ENCODE measurements at regions of chr2 and their contacts with region 1.

Region 1: DNA sequence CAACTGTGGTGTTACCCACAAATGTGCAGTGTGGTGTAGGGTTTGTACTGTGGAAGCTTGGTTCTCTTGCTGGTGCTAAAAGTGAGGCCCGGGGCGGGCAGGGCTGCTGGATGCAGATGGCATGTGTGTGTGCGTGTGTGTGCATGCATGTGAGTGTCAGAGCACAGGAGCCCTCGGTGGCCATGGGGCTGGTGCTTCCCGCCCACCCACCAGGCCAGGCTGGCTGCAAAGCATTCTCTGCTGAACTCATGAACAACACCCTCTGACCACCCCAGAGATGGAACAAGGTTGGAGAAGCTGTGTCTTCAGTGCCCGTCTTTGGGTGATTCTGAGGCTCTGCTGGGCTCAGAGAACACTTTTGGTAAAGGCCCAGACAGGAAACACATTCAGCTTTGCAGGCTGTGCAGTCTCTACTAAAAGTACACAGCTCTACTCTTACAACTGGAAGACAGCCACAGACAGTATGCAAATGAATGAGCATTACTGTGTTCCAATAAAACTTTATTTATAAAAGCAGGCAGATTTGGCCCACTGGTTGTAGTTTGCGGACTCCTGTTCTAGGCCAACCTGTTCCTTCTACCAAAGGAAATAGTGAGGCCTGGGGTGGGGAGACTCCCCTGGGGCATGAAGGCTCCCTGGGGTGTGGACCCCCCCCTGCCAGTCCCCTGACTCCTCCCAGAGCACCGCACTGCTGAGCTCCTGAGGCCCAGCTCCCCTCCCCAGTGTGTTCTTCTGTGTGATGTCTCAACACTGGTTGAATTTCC is 225.3 kb upstream of the HDAC4 start:
- DNase-seq: no peak
- H3K4me3 Mint-ChIP-seq: no peak overlapping the region
- H3K27ac Mint-ChIP-seq: no peak overlapping the region
- H3K4me1 Mint-ChIP-seq: peaks cover 42% of the 10 kb centered on the region
- H3K27me3 Mint-ChIP-seq: peaks cover 10% of the 10 kb centered on the region

Region 2: GRCh38 chr2:239544143-239544917 is 81.8 kb before region 1 on chr2:
- intact Hi-C with region 1: loop called (anchors 1 kb)
- DNase-seq: no peak
- H3K4me3 Mint-ChIP-seq: no peak overlapping the region
- H3K27ac Mint-ChIP-seq: peak overlapping the region; percentile 61
- H3K4me1 Mint-ChIP-seq: peaks cover 49% of the 10 kb centered on the region
- H3K27me3 Mint-ChIP-seq: peaks cover 8% of the 10 kb centered on the region

Measured in activated T-helper 2 cell treated with anti-CD3 and anti-CD28 coated beads, Interferon-gamma antibody, Interleukin-2, Interleukin-4, amounts not matched to agents 10 μg/mL and 5 μg/mL and 100 μg/mL, durations not matched to agents 14 hours and 24 hours and 36 hours (primary cell).